Ovary (tissue), 10 donors: ENCODE measurements at regions of chr6 and their contacts with region 1.

Region 1: GRCh38 chr6:71745525-71745924 is 140.8 kb upstream of the RIMS1 start:
- DNase-seq: no peak
- H3K4me3 ChIP-seq: no peak overlapping the region
- H3K27ac ChIP-seq: no peak overlapping the region
- H3K4me1 ChIP-seq: no peaks in the 10 kb centered on the region
- H3K27me3 ChIP-seq: no peaks in the 10 kb centered on the region
- CTCF ChIP-seq: no peak
- EP300 ChIP-seq: no peak
- POLR2A ChIP-seq: no peak

Region 2: DNA sequence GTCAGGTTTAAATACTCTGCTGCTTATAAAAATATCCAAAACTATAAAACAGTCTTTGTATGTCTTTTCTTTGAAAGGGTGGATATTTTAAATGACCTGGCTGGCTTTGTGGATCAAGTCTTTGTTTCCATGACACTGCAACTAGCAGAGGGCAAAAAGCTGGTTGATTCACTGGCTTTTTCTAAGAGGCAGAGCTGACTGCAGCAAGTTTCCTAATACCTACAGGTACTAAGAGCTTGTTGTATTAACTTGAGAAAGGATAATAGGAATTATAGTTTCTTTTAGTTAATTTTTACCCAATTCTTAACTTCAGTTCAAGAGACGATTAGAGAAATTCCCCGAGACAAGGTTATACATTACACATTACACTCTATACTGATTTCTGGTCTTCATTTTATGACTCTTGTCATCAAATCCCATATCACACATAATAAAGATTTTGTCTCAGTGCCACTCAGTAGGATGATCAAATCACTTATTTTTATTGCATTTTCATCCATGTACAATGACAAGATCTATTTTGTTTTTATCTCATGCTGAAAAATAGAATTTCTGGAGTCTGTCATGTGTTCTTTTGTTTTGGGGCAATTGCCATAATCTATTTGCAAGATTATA is 20.7 kb after region 1 on chr6:
- intact Hi-C with region 1: loop called in 1 of 4 experiments (anchors 1 kb)
- DNase-seq: no peak
- H3K4me3 ChIP-seq: no peak overlapping the region
- H3K27ac ChIP-seq: no peak overlapping the region
- H3K4me1 ChIP-seq: no peaks in the 10 kb centered on the region
- H3K27me3 ChIP-seq: no peaks in the 10 kb centered on the region
- CTCF ChIP-seq: no peak
- EP300 ChIP-seq: no peak
- POLR2A ChIP-seq: no peak